Caco-2 (cell line): ENCODE measurements at regions of chr11 and their contacts with region 1.

Region 1: DNA sequence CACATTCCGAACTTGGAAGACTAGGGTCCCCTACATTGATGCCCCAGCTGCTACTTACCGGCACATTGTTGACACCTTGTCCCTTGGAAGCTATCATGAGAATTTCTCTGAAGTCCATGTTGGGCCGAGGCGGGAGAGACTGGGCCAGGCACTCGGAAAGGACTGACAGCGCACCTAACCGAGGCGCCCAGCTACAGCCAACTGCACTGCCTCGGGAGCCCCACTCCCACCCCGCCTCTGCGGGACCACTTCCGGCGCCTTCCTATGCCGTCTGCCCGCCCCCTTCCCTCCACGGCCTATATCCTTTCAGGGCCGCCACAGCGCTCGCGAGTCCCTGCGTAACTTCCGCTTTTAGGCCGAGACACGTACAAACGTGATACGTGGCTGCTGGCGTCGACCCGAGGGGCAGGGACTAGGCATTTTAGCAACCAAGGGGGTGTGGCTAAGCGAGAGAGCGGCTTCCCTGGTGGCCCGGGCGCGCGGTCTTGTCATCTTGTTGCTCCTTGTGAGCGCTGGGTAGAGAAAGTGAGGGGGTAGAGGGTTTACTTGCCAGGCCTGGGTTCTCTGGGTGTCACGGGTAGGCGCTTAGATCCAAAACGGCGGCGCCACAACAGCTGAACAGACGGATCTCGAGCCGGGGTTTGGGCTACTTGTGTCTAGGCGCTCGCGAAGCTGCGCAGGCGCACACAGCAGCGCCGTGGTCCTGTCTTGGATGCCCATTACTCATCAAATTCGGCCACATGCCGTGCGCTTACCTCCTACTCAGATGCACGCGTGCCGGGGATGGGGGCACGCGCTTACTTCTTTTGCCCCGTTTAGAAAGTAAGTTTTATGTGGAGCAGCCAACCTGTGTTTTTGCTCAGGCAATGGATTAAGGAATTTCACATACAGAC is at the start of gene SPTY2D1:
- DNase-seq: peak; percentile 98 to 99
- H3K4me3 ChIP-seq: peak within 1 kb of the TSS; percentile 67
- H3K4me3 Mint-ChIP-seq: peak within 1 kb of the TSS; percentile 89
- H3K27ac Mint-ChIP-seq: peak within 1 kb of the TSS; percentile 98
- H3K4me1 ChIP-seq: peaks cover 2% of the 10 kb centered on the region; the same call in 1 of the 2 replicates
- H3K4me1 Mint-ChIP-seq: no peaks in the 10 kb centered on the region
- H3K27me3 ChIP-seq: no peaks in the 10 kb centered on the region
- H3K27me3 Mint-ChIP-seq: peaks cover 4% of the 10 kb centered on the region
- CTCF ChIP-seq: no peak
- total RNA-seq, gene SPTY2D1: 21.4 and 24.6 TPM in 2 replicates

Region 2: DNA sequence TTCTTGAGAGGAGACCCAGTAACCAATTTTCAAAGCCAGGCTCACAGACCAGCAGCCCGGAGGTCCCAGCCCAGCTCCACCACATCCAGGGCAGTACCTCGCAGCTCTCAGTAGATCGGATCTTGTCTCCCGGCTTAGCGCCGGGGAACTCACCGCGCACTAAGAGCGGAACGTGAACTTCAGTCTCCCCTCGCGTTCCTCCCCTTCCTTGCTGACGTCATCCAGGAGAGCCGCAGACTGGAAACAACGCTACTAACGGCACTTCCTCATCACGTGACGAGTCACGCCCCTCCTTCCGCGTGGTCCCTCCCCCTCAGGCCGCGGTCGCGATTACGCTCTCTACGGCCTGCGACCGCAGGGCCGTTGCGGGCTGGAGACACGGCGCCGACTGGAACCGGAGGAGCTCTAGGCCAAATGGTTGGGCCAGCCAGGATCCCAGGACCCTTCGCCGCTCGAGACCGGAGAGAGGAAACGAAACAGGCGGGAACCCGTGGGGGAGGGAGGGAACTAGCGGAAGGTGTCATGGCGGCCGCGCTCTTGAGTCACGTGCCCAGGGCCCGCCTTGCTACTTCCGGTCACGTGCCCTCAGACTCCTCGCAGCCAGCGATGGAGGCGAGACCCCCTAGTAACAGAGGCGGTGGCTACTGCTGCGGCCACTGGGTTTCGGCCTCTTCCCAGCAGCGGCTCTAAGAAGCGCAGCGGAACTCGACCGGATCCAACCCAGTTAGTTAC is 312.2 kb before region 1 on chr11 and contains the starts of genes GTF2H1 and HPS5:
- CTCF ChIA-PET with region 1: no interaction called
- POLR2A ChIA-PET with region 1: no interaction called
- intact Hi-C with region 1: loop called (anchors 5 kb)
- DNase-seq: peak; percentile 96 to 99
- H3K4me3 ChIP-seq: peak within 1 kb of the TSS; percentile 87
- H3K4me3 Mint-ChIP-seq: peak within 1 kb of the TSS; percentile 84
- H3K27ac Mint-ChIP-seq: peak within 1 kb of the TSS; percentile 100
- H3K4me1 ChIP-seq: peaks cover 19% of the 10 kb centered on the region
- H3K4me1 Mint-ChIP-seq: peaks cover 30% of the 10 kb centered on the region
- H3K27me3 ChIP-seq: no peaks in the 10 kb centered on the region
- H3K27me3 Mint-ChIP-seq: no peaks in the 10 kb centered on the region
- CTCF ChIP-seq: peak in 1 of 2 experiments; percentile 1
- total RNA-seq, gene GTF2H1: 63.0 and 72.0 TPM in 2 replicates
- total RNA-seq, gene HPS5: 17.5 TPM in 2 replicates

Region 3: DNA sequence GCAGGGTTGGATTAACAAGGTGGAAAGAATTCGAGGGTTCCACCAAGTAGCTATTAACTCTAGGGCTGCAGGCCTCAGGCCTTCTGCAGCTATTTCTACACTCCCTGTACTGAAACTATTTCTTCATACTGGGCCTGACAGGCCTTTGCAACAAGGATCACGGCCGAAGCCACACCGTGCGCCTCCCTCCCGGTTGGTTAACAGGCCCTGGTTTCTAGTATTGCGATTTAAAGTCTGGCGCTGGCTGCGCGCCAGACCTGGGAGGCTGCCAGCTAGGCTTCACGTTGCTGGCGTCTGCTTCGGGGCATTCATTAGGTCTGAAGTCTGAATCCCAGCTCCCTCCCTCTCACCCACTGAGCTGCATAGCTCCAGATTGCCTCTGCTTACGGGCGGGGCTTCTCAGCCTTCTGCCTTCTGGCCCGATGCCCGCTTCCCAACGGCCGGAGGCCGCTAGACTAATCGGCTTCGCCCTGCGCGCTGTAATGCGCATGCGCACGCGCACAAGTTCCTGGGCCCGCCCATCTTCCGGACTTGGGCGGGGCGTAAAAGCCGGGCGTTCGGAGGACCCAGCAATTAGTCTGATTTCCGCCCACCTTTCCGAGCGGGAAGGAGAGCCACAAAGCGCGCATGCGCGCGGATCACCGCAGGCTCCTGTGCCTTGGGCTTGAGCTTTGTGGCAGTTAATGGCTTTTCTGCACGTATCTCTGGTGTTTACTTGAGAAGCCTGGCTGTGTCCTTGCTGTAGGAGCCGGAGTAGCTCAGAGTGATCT is 238.5 kb before region 1 on chr11:
- CTCF ChIA-PET with region 1: no interaction called
- POLR2A ChIA-PET with region 1: interaction called, 3 read pairs
- intact Hi-C with region 1: loop called (anchors 5 kb)
- DNase-seq: peak; percentile 97 to 98
- H3K4me3 ChIP-seq: peak overlapping the region; percentile 96
- H3K4me3 Mint-ChIP-seq: peak overlapping the region; percentile 98
- H3K27ac Mint-ChIP-seq: peak overlapping the region; percentile 98
- H3K4me1 ChIP-seq: no peaks in the 10 kb centered on the region; the same call in 1 of the 2 replicates
- H3K4me1 Mint-ChIP-seq: no peaks in the 10 kb centered on the region
- H3K27me3 ChIP-seq: no peaks in the 10 kb centered on the region
- H3K27me3 Mint-ChIP-seq: no peaks in the 10 kb centered on the region
- CTCF ChIP-seq: no peak

Region 4: DNA sequence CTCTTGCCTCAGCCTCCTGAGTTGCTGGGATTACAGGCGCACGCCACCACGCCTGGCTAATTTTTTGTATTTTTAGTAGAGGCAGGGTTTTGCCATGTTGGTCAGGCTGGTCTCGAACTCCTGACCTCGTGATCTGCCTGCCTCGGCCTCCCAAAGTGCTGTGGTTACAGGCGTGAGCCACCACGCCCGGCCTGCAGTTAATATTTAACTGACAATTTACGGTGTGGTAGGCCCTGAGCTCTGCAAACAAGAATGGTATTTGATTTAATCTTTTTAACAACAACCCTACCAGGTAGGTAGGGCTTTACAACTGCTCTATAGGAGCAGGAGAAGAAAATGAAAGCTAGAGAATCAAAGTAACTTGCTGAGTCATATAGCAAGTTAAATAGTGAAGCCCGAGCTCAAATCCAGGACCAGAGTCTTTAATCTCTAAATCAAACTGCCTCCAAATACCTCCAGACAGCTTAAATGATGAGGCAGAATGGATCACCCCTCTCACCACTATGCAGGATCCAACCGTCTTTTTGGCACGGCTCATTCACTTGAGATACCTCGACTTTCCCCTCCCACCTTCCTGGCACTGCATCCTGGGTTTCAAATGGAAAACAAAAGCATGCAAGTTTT is 55.3 kb before region 1 on chr11:
- CTCF ChIA-PET with region 1: no interaction called
- POLR2A ChIA-PET with region 1: interaction called, 17 read pairs
- intact Hi-C with region 1: no loop called
- DNase-seq: peak; percentile 88
- H3K4me3 ChIP-seq: 0 out of 2 replicates have a peak overlapping the region, but pooled peaks have one; percentile 8
- H3K4me3 Mint-ChIP-seq: peak overlapping the region; percentile 36
- H3K27ac Mint-ChIP-seq: peak overlapping the region; percentile 69
- H3K4me1 ChIP-seq: peaks cover 17% of the 10 kb centered on the region
- H3K4me1 Mint-ChIP-seq: no peaks in the 10 kb centered on the region
- H3K27me3 ChIP-seq: no peaks in the 10 kb centered on the region
- H3K27me3 Mint-ChIP-seq: no peaks in the 10 kb centered on the region
- CTCF ChIP-seq: no peak

Region 5: GRCh38 chr11:18588297-18589252 is 45.8 kb before region 1 on chr11 and contains the start of gene UEVLD:
- CTCF ChIA-PET with region 1: interaction called, 3 read pairs
- POLR2A ChIA-PET with region 1: interaction called, 6 read pairs
- intact Hi-C with region 1: loop called (anchors 2 kb)
- DNase-seq: peak; percentile 94
- H3K4me3 ChIP-seq: peak within 1 kb of the TSS; percentile 73
- H3K4me3 Mint-ChIP-seq: no peak within 1 kb of the TSS
- H3K27ac Mint-ChIP-seq: no peak within 1 kb of the TSS
- H3K4me1 ChIP-seq: peaks cover 14% of the 10 kb centered on the region; the same call in 1 of the 2 replicates
- H3K4me1 Mint-ChIP-seq: no peaks in the 10 kb centered on the region
- H3K27me3 ChIP-seq: no peaks in the 10 kb centered on the region
- H3K27me3 Mint-ChIP-seq: no peaks in the 10 kb centered on the region
- CTCF ChIP-seq: no peak
- total RNA-seq, gene UEVLD: 15.9 and 19.2 TPM in 2 replicates

Region 6: GRCh38 chr11:18731949-18732821 is 97.8 kb after region 1 on chr11:
- CTCF ChIA-PET with region 1: no interaction called
- POLR2A ChIA-PET with region 1: no interaction called
- intact Hi-C with region 1: loop called (anchors 5 kb)
- DNase-seq: peak; percentile 60 to 74
- H3K4me3 ChIP-seq: no peak overlapping the region
- H3K4me3 Mint-ChIP-seq: no peak overlapping the region
- H3K27ac Mint-ChIP-seq: no peak overlapping the region
- H3K4me1 ChIP-seq: 0 out of 2 replicates have a peak, but pooled peaks cover 17% of the 10 kb centered on the region
- H3K4me1 Mint-ChIP-seq: peaks cover 23% of the 10 kb centered on the region
- H3K27me3 ChIP-seq: no peaks in the 10 kb centered on the region
- H3K27me3 Mint-ChIP-seq: peaks cover 10% of the 10 kb centered on the region
- CTCF ChIP-seq: peak; percentile 91 to 98